ENCODE measurements at regions of chr11 and their contacts with region 1.

Region 1: GRCh38 chr11:71059662-71060061 is 192.7 kb downstream of the SHANK2 start:
- DNase-seq: no peak
- ATAC-seq: no peak
- H3K4me3 ChIP-seq: no peak overlapping the region
- H3K27ac ChIP-seq: no peak overlapping the region
- H3K4me1 ChIP-seq: no peaks in the 10 kb centered on the region
- H3K27me3 ChIP-seq: peaks cover 0 to 43% of the 10 kb centered on the region in 2 experiments; a peak in 2 of 5 replicates
- CTCF ChIP-seq: no peak
- EP300 ChIP-seq: no peak
- POLR2A ChIP-seq: no peak
- RAD21 ChIP-seq: no peak

Region 2: DNA sequence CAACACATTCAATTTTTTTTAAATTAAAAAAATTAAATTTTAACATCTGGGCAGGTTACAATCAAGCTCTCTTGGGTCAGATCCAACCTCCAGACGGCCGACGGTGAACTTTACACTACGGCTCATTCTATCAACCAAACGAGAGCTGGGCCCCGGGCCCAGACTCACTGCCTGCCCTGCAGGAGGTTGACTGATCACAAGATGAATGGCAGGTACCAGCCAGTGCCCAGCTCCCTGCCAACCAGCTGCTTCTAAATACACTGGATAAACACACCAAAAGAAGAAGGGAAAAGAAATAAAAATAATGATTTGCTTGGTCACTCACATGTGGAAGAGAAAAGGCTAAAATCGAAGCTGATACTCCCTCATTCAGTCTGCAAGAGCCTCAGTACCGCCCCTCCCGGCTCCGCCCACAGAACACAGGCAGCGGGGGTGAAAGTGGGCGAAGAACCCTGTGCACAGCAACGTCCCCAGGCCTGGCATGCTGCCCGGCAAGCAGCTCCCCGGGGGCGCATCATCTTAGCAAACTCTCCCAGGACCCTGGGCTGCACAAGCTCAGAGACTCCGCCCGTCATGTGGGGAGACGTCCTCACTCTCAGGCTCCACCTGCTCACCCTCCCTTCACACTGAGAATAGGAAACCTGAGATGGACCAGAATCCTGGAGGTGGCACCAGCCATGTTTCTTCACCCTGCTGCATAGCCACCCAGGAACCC is 110.7 kb before region 1 on chr11:
- CTCF ChIA-PET with region 1: no interaction called
- POLR2A ChIA-PET with region 1: no interaction called
- in situ Hi-C with region 1: loop called (anchors 5 kb)
- intact Hi-C with region 1: no loop called
- DNase-seq: no peak
- ATAC-seq: no peak
- H3K4me3 ChIP-seq: no peak overlapping the region
- H3K27ac ChIP-seq: no peak overlapping the region
- H3K4me1 ChIP-seq: 0 out of 5 replicates have a peak, but pooled peaks cover 0 to 3% of the 10 kb centered on the region in 2 experiments
- H3K27me3 ChIP-seq: 0 out of 5 replicates have a peak, but pooled peaks cover 0 to 2% of the 10 kb centered on the region in 2 experiments
- CTCF ChIP-seq: no peak
- EP300 ChIP-seq: no peak
- POLR2A ChIP-seq: no peak
- RAD21 ChIP-seq: no peak

Region 3: DNA sequence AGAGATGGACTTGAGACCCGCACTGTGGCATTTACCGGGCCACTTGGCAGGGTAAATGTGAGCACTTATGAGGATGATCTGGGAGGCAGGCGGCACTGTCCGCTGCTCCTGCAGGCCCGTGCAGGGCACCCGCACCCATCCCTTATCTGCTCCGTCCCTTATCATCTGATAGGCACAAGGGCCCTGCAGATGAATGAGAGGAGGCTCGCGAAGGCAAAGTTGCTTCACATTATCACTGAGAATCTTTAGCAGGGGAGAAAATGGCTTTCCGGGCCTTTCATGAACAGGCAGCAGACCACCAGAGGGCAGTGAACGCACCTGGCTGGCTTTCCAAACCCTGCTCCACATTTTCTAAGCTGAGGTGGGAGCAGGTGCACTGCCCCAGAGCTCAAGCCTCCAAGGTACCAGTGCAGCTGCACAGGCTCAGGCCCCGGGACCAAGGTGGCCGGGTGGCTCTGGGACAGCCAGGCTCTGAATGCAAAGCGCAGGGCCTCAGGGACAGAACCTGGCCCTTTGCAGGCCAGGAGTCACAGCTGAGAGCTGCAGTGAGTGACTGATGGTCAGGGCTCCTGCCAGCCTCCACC is 27.1 kb after region 1 on chr11:
- CTCF ChIA-PET with region 1: no interaction called
- POLR2A ChIA-PET with region 1: no interaction called
- in situ Hi-C with region 1: no loop called
- intact Hi-C with region 1: no loop called
- DNase-seq: peak; percentile 21 to 37 (median 28)
- ATAC-seq: peak; percentile 70; the same call in 2 of the 3 replicates
- H3K4me3 ChIP-seq: no peak overlapping the region
- H3K27ac ChIP-seq: no peak overlapping the region
- H3K4me1 ChIP-seq: peaks cover 0 to 3% of the 10 kb centered on the region in 2 experiments; a peak in 1 of 5 replicates
- H3K27me3 ChIP-seq: peaks cover 0 to 23% of the 10 kb centered on the region in 2 experiments; a peak in 3 of 5 replicates
- CTCF ChIP-seq: peak; percentile 51 to 54 (median 52)
- EP300 ChIP-seq: no peak
- POLR2A ChIP-seq: no peak
- RAD21 ChIP-seq: peak in 1 of 2 experiments; percentile 47; a peak in 2 of 4 replicates